Posterior vena cava (tissue), 2 donors: ENCODE measurements at regions of chr7 and their contacts with region 1.

Region 1: GRCh38 chr7:101714097-101714496 is 85.0 kb upstream of the MYL10 start:
- DNase-seq: no peak

Region 2: DNA sequence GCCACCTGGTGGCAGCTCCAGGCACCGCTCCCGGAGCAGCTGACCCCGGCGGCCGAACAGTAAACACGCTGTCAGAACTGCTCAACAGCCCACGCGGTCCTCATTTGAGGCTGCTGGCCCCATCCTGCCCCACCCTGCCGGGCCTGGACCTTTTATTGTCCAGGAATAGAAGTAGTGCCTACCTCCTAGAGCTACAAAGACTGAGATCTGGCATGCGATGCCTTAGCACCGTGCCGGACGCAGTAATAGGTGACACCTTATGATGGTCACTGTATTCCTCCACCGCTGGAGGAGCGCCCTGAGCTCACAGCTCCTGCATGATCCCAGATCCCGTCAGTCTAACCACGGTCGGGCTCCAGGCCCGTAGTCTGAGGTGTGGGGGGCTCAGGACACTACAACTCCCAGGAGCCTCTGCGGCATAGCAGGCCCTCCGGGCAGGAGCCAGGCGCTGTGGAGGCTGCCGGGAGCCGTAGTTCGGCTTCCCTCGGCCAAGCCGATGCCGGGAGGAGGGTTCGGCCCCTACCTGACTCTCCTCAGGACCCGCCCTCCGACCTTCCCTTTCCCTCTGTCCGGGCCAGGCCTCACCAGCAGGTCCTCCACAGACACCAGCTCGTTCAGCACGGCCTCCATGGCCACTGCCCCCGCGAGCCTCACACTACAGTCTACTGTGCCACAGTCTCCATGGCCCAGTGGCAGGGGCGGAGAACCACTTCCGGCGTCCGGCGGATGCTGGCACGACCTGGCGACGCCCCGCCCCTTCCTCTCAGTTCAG is 469.5 kb before region 1 on chr7 and contains the start of gene FIS1:
- intact Hi-C with region 1: no loop called
- DNase-seq: peak; percentile 98
- total RNA-seq, gene FIS1: 166 to 181 TPM

Region 3: DNA sequence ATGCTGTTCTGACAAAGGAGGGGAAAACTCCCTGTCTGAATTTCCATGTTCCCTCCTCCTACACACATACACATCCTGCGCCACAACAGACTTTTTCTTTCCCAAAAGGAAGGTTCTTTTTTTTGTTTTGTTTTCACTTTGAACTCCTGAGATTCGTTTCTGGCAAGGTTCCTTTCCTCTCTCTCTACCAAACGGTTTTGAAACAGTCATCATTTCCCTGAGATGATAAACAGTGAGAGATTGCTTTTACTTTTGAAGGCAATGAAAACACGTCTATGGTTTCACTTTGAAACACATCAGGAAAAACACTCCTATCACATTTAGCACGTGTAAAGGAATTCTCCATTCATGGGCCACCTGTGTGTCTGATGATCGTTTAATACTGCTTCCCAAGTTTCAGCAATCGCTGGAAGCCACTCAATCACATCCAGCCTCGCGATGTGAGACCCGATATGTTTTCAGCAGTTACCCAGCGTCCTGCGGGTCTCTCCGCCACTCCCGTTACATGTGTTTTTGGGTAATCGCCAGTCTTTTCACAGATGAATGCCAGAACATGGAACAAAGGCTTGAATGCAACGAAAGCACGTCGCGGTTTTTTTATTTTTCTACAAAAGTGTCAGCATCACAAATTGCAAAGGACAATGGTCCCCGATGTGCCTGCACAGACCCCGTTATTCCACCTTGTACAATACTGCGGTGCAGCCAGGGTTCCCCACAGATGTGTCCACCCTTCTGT is 40.5 kb after region 1 on chr7:
- intact Hi-C with region 1: loop called in 1 of 2 experiments (anchors 1 kb)
- DNase-seq: no peak